Panc1 (cell line): ENCODE measurements at regions of chr22 and their contacts with region 1.

Region 1: GRCh38 chr22:50271519-50271970 is 1.4 kb upstream of the MAPK11 start:
- DNase-seq: no peak
- ATAC-seq: peak; percentile 57
- H3K4me3 ChIP-seq: peak overlapping the region; percentile 56 to 59
- H3K27ac ChIP-seq: peak overlapping the region; percentile 70
- H3K4me1 ChIP-seq: peaks cover 23% of the 10 kb centered on the region
- H3K27me3 ChIP-seq: no peaks in the 10 kb centered on the region
- CTCF ChIP-seq: no peak; the same call in 1 of the 2 replicates

Region 2: GRCh38 chr22:50046481-50047245 is 224.9 kb before region 1 on chr22:
- CTCF ChIA-PET with region 1: interaction called, 10 read pairs
- POLR2A ChIA-PET with region 1: no interaction called
- in situ Hi-C with region 1: no loop called
- intact Hi-C with region 1: no loop called
- DNase-seq: no peak
- ATAC-seq: no peak
- H3K4me3 ChIP-seq: no peak overlapping the region
- H3K27ac ChIP-seq: no peak overlapping the region
- H3K4me1 ChIP-seq: no peaks in the 10 kb centered on the region
- H3K27me3 ChIP-seq: no peaks in the 10 kb centered on the region
- CTCF ChIP-seq: no peak

Region 3: DNA sequence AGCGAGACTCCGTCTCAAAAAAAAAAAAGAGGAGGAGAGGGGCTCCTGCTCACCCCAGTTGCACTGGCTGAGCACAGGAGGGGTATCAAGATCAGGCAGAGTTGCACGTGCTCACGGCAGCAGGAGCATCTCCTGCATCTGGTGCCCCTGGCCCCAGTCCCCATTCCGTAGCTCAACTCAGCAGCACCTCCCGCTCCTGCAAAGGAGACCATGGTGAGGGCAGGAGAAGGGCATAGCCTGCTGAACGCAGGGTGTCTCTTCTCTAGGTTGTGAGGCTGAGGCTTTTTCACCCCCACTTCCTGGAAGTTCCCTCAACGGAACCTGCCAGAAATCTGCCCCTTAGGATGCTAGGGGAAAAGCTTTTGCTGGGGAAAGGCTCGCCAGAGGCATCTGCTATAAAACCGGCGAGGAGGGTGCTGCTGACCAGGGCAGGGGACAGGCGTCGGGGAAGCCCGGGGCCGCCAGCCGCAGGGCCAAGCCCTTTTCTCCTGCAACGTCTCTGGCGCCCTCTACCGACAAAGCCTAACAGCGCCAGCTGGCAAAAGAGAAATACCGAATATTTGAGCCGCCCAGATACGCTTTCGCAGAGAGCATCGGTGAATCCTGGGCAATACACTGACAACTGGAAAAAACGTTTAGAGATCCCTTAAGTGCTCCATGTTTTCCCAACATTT is 70.6 kb after region 1 on chr22:
- CTCF ChIA-PET with region 1: no interaction called
- POLR2A ChIA-PET with region 1: no interaction called
- in situ Hi-C with region 1: no loop called
- intact Hi-C with region 1: loop called (anchors 5 kb)
- DNase-seq: peak; percentile 74
- ATAC-seq: peak; percentile 84
- H3K4me3 ChIP-seq: peak overlapping the region; percentile 64 to 70
- H3K27ac ChIP-seq: peak overlapping the region; percentile 81
- H3K4me1 ChIP-seq: peaks cover 3% of the 10 kb centered on the region; the same call in 1 of the 2 replicates
- H3K27me3 ChIP-seq: no peaks in the 10 kb centered on the region
- CTCF ChIP-seq: peak; percentile 94